ENCODE measurements at regions of chr10 and their contacts with region 1.

Region 1: GRCh38 chr10:69716711-69717560 is 84.8 kb upstream of the COL13A1 start:
- DNase-seq: no peak
- H3K4me3 ChIP-seq: no peak overlapping the region
- H3K27ac ChIP-seq: no peak overlapping the region
- H3K4me1 ChIP-seq: no peaks in the 10 kb centered on the region
- H3K27me3 ChIP-seq: peaks cover 0 to 16% (median 0%) of the 10 kb centered on the region in 3 donors
- CTCF ChIP-seq: peak in 3 of 4 experiments; percentile 56 to 73 (median 66)
- EP300 ChIP-seq: no peak
- POLR2A ChIP-seq: no peak

Region 2: GRCh38 chr10:69644658-69645295 is 72.2 kb before region 1 on chr10:
- intact Hi-C with region 1: loop called (anchors 2 kb)
- DNase-seq: peak; percentile 65
- H3K4me3 ChIP-seq: no peak overlapping the region
- H3K27ac ChIP-seq: no peak overlapping the region
- H3K4me1 ChIP-seq: no peaks in the 10 kb centered on the region
- H3K27me3 ChIP-seq: peaks cover 0 to 4% (median 0%) of the 10 kb centered on the region in 3 donors
- CTCF ChIP-seq: peak; percentile 26 to 77 (median 72)
- EP300 ChIP-seq: no peak
- POLR2A ChIP-seq: no peak

Region 3: DNA sequence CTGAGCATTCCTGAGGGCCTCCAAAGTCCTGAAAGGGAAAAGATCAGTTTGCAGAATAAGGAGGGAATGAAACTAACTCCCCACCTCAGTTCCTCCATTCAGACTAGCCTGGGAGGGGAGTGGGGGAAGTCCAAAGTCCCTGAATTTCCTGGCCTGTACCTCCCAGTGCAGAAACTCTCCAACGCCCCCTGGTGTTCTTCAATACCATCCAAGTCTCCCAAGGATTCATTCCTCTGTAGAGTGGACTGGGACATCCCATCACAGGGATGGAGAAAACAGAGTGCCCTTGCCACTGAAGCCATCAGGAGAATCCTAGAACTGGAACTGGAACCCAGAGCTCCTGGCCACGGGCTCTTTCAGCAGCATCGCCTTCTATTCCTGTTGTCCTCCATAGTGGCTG is 83.2 kb after region 1 on chr10:
- intact Hi-C with region 1: no loop called
- DNase-seq: no peak
- H3K4me3 ChIP-seq: no peak overlapping the region
- H3K27ac ChIP-seq: no peak overlapping the region
- H3K4me1 ChIP-seq: peaks cover 0 to 26% (median 21%) of the 10 kb centered on the region in 4 donors
- H3K27me3 ChIP-seq: peaks cover 0 to 26% (median 21%) of the 10 kb centered on the region in 3 donors
- CTCF ChIP-seq: peak in 2 of 4 experiments; percentile 17 to 42
- EP300 ChIP-seq: no peak
- POLR2A ChIP-seq: no peak

Region 4: GRCh38 chr10:69845574-69846292 is 128.8 kb after region 1 on chr10:
- intact Hi-C with region 1: no loop called
- DNase-seq: peak; percentile 82
- H3K4me3 ChIP-seq: no peak overlapping the region
- H3K27ac ChIP-seq: peak overlapping the region in 2 of 4 donors; percentile 56 to 58
- H3K4me1 ChIP-seq: peaks cover 0 to 54% (median 34%) of the 10 kb centered on the region in 4 donors
- H3K27me3 ChIP-seq: no peaks in the 10 kb centered on the region
- CTCF ChIP-seq: no peak
- EP300 ChIP-seq: peak in 3 of 4 donors; percentile 42 to 82 (median 73)
- POLR2A ChIP-seq: no peak